B cell (primary cell): ENCODE measurements at regions of chr16 and their contacts with region 1.

Region 1: GRCh38 chr16:75372236-75372856 is 61.0 kb downstream of the CFDP1 start:
- DNase-seq: no peak
- ATAC-seq: no peak
- H3K4me3 ChIP-seq: no peak overlapping the region
- H3K4me3 Mint-ChIP-seq: no peak overlapping the region
- H3K27ac ChIP-seq: no peak overlapping the region
- H3K27ac Mint-ChIP-seq: no peak overlapping the region
- H3K4me1 ChIP-seq: no peaks in the 10 kb centered on the region
- H3K4me1 Mint-ChIP-seq: no peaks in the 10 kb centered on the region
- H3K27me3 ChIP-seq: peaks cover 0 to 61% (median 36%) of the 10 kb centered on the region in 4 experiments
- H3K27me3 Mint-ChIP-seq: peaks cover 51% of the 10 kb centered on the region
- CTCF ChIP-seq: no peak

Region 2: GRCh38 chr16:75351183-75351582 is 21.2 kb before region 1 on chr16:
- CTCF ChIA-PET with region 1: no interaction called
- POLR2A ChIA-PET with region 1: interaction called, 11 read pairs
- intact Hi-C with region 1: no loop called
- DNase-seq: no peak
- ATAC-seq: no peak
- H3K4me3 ChIP-seq: no peak overlapping the region
- H3K4me3 Mint-ChIP-seq: no peak overlapping the region
- H3K27ac ChIP-seq: no peak overlapping the region
- H3K27ac Mint-ChIP-seq: no peak overlapping the region
- H3K4me1 ChIP-seq: no peaks in the 10 kb centered on the region
- H3K4me1 Mint-ChIP-seq: no peaks in the 10 kb centered on the region
- H3K27me3 ChIP-seq: no peaks in the 10 kb centered on the region
- H3K27me3 Mint-ChIP-seq: peaks cover 6% of the 10 kb centered on the region
- CTCF ChIP-seq: no peak